ENCODE measurements at regions of chr15 and their contacts with region 1.

Region 1: GRCh38 chr15:68672781-68673205 is 94.0 kb downstream of the CORO2B start:
- DNase-seq: peak; percentile 45
- H3K4me3 ChIP-seq: no peak overlapping the region
- H3K27ac ChIP-seq: no peak overlapping the region
- H3K4me1 ChIP-seq: no peaks in the 10 kb centered on the region
- H3K27me3 ChIP-seq: no peaks in the 10 kb centered on the region
- CTCF ChIP-seq: no peak
- EP300 ChIP-seq: no peak
- POLR2A ChIP-seq: no peak

Region 2: DNA sequence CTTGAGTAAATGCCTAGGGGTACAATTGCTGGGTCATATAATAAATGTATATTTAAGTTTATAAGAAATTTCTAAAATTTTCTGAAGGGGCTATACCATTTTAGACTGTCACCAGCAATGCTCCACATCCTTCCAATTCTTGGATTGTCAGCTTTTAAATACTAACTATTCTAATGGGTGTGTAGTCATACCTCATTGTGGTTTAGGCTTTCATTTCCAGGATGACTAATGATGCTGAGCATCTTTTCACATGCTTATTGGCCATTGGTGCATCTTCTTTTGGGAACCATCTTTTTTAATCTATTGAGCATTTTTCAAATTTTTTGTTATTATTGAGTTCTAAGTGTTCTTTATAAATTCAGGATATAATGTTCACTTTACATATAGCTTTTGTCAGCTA is 146.5 kb before region 1 on chr15:
- intact Hi-C with region 1: no loop called
- DNase-seq: no peak
- H3K4me3 ChIP-seq: no peak overlapping the region
- H3K27ac ChIP-seq: no peak overlapping the region
- H3K4me1 ChIP-seq: no peaks in the 10 kb centered on the region
- H3K27me3 ChIP-seq: no peaks in the 10 kb centered on the region
- CTCF ChIP-seq: no peak
- EP300 ChIP-seq: no peak
- POLR2A ChIP-seq: no peak

Region 3: DNA sequence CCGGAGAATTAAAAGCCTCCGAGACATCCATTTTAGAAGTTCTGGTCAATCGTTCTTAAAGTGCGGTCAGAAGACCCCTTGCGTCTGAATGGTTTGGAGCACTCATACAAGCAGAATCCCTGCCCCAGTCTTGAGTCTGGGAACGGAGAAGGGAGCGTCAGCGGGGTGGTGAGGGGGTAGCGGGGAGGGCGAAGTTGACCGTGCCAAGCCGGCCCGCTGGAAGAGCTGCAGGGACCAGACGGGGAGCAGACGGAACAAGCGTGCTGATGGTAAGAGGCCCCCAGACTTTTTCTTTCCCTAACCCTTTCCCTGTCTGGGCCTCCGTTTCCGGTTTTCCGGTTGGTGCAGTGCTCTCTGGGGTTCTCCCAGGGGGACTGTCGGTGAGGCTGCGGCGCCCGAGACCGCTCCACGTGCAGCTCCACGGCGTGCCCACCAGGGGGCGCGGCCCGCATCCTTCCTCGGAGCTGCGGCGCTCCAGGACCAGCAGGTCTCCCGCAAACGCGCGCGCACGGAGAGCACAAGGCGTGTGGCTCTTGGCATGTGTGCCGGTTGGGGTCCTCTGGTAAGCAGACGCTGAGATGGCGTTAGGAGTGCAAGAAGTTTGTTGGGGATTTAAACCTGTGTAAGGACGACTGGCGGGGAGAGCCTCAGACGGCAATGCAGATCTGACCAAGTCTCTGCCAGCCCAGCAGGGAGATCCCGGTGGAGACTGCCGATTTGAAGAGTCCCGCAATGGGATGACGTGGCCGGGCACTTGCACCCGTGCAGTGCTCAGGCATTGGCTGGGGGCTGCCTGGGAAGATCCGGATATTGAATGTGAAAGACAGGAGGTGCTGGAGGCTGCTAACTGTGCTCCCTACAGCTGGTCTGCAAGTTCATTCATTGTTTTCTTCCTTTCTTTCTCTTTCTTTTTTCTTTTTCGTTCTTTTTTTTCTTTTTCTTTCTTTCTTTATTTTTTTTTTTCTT is 113.2 kb before region 1 on chr15:
- intact Hi-C with region 1: loop called (anchors 1 kb)
- DNase-seq: peak; percentile 87
- H3K4me3 ChIP-seq: peak overlapping the region; percentile 9 to 48 (median 38)
- H3K27ac ChIP-seq: no peak overlapping the region
- H3K4me1 ChIP-seq: peaks cover 0 to 13% (median 10%) of the 10 kb centered on the region in 4 donors
- H3K27me3 ChIP-seq: peaks cover 0 to 43% (median 4%) of the 10 kb centered on the region in 3 donors
- CTCF ChIP-seq: peak; percentile 87 to 97 (median 95)
- EP300 ChIP-seq: no peak
- POLR2A ChIP-seq: no peak

Region 4: GRCh38 chr15:68578174-68578979 is 94.4 kb before region 1 on chr15:
- intact Hi-C with region 1: loop called (anchors 1 kb)
- DNase-seq: peak; percentile 89
- H3K4me3 ChIP-seq: peak overlapping the region; percentile 38 to 67 (median 56)
- H3K27ac ChIP-seq: peak overlapping the region; percentile 39 to 78 (median 70)
- H3K4me1 ChIP-seq: peaks cover 2 to 21% (median 18%) of the 10 kb centered on the region in 4 donors
- H3K27me3 ChIP-seq: peaks cover 11 to 59% (median 43%) of the 10 kb centered on the region in 3 donors
- CTCF ChIP-seq: peak in 2 of 4 experiments; percentile 25 to 40
- EP300 ChIP-seq: no peak
- POLR2A ChIP-seq: no peak

Region 5: DNA sequence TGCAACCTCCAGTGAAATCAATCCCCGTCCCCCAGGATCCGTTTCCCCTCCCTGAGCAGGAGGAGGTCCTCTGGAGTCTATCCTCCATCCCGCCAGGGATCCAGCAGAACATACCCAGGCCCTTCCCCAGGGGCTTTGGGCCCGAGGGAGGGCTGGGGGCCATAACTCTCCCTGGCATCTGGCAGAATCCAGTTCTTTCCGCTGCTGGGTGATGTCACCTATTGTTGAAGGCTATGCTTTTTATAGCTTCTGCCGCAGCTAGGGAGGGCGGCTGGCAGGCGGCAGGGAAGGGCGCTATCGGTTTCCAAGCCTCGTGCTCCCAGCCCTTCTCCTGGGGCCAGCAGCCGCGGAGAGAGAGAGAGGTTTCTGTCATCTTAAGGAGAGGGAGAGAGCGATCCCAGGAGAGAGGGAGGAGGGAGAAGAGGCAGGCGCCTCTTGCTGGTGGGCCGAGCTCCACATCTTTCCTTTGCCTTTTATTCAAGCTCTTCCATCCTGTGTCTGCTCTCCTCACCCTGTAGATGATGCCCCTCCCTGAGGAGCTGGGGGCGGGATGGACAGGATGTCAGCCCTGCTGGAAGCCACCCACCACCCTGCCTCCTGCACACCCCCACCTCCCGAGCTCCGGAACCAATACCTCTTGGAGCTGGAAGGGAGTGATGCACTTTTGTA is 27.8 kb after region 1 on chr15:
- intact Hi-C with region 1: no loop called
- DNase-seq: peak; percentile 86
- H3K4me3 ChIP-seq: peak overlapping the region in 3 of 4 donors; percentile 9 to 30 (median 16)
- H3K27ac ChIP-seq: peak overlapping the region in 3 of 4 donors; percentile 10 to 73 (median 73)
- H3K4me1 ChIP-seq: peaks cover 0 to 17% (median 16%) of the 10 kb centered on the region in 4 donors
- H3K27me3 ChIP-seq: no peaks in the 10 kb centered on the region
- CTCF ChIP-seq: no peak
- EP300 ChIP-seq: peak in 2 of 4 donors; percentile 32 to 47
- POLR2A ChIP-seq: no peak